Endothelial cell of umbilical vein (primary cell): ENCODE measurements at regions of chr4 and their contacts with region 1.

Region 1: DNA sequence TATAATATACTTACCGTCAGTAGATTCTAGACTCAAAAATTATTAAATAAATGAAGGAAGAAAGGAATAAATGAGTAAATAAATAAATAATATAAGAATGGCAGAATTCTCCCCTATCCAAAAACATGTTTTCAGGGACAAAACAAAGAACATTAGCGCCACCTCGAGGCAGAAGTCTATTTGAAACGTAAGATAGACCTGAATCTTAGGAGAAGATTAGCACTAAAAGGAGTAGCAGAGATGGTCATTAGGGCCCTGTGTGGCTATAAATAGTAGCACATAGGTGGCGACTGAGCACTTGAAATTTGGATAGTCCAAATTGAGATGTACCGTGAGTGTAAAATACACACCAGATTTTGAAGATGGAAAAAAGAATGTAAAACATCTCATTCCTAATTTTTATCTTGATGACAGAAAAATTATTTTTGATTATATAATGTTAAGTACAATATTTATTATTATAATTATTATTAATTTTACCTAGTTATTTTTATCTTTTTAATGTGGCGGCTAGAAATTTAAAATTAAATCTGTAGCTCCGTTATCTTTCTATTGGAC is 24.3 kb upstream of the SRD5A3 start:
- DNase-seq: peak; percentile 82
- H3K4me3 ChIP-seq: no peak overlapping the region
- H3K27ac ChIP-seq: no peak overlapping the region
- H3K4me1 ChIP-seq: peaks cover 41% of the 10 kb centered on the region
- H3K27me3 ChIP-seq: no peaks in the 10 kb centered on the region
- CTCF ChIP-seq: peak; percentile 45 to 49
- POLR2A ChIP-seq: no peak

Region 2: DNA sequence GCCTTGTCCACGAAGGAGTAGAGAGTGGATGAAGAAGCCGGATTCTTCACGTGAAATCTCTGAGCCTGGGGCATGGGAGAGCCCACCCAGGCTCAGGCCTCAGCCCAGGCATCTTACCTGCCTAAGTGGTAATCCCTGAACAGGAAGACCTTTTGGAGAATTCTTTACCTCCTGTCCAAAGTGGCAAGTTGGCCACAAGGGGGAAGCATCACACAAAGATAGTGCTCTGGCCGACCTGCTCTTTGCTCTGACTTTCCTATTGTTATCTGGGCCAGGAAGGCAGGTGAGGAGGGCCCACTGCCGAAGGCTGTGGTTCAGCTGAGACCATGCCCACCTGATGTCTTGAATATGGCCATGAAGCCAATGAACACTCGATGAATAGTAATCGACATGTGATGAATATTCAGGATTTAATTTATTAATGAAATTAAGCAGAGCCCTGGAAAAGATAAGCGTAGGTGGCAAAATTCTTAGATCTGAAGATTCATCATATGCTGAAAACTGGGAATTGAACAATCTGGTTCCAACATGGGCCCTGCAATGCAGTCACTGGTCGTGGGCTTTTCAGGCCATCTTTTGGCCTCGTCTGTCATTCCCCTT is 998.9 kb before region 1 on chr4:
- CTCF ChIA-PET with region 1: no interaction called
- POLR2A ChIA-PET with region 1: no interaction called
- dilution Hi-C with region 1: no loop called
- intact Hi-C with region 1: loop called (anchors 5 kb)
- DNase-seq: peak; percentile 60
- H3K4me3 ChIP-seq: no peak overlapping the region
- H3K27ac ChIP-seq: no peak overlapping the region
- H3K4me1 ChIP-seq: no peaks in the 10 kb centered on the region
- H3K27me3 ChIP-seq: peaks cover 0 to 2% of the 10 kb centered on the region in 2 experiments
- CTCF ChIP-seq: peak; percentile 58 to 73
- POLR2A ChIP-seq: no peak

Region 3: GRCh38 chr4:55069248-55069647 is 252.5 kb before region 1 on chr4:
- CTCF ChIA-PET with region 1: interaction called, 4 read pairs
- POLR2A ChIA-PET with region 1: no interaction called
- dilution Hi-C with region 1: no loop called
- intact Hi-C with region 1: loop called (anchors 5 kb)
- DNase-seq: peak; percentile 95
- H3K4me3 ChIP-seq: peak overlapping the region in 1 of 3 experiments; percentile 2
- H3K27ac ChIP-seq: peak overlapping the region; percentile 98
- H3K4me1 ChIP-seq: peaks cover 26% of the 10 kb centered on the region
- H3K27me3 ChIP-seq: no peaks in the 10 kb centered on the region
- CTCF ChIP-seq: no peak
- POLR2A ChIP-seq: peak; percentile 60

Region 4: DNA sequence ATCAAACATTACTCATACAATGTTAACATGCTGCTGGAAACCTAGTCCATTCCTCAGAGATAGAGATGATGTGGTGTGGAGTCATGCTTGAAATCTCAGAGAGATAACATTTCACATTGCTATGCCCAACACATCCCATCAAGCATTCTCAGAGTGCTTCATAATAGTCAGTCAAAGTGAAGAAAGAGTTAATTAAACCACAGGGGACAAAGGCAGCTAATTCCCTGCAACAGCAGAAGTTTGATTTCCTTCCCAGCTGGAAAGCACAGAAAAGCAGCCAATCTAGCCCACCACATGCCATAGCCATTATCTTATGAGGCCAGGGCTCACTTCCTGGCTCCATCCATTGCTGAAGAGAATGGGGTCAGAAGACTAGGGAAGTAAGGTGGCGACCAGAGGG is 205.3 kb before region 1 on chr4:
- CTCF ChIA-PET with region 1: interaction called, 12 read pairs
- POLR2A ChIA-PET with region 1: no interaction called
- dilution Hi-C with region 1: no loop called
- intact Hi-C with region 1: loop called (anchors 1 kb)
- DNase-seq: peak; percentile 66
- H3K4me3 ChIP-seq: no peak overlapping the region
- H3K27ac ChIP-seq: no peak overlapping the region
- H3K4me1 ChIP-seq: peaks cover 60% of the 10 kb centered on the region
- H3K27me3 ChIP-seq: no peaks in the 10 kb centered on the region
- CTCF ChIP-seq: no peak
- POLR2A ChIP-seq: no peak

Region 5: GRCh38 chr4:55184600-55185523 is 136.9 kb before region 1 on chr4:
- CTCF ChIA-PET with region 1: interaction called, 51 read pairs
- POLR2A ChIA-PET with region 1: no interaction called
- dilution Hi-C with region 1: no loop called
- intact Hi-C with region 1: no loop called
- DNase-seq: no peak
- H3K4me3 ChIP-seq: no peak overlapping the region
- H3K27ac ChIP-seq: peak overlapping the region; percentile 63
- H3K4me1 ChIP-seq: peaks cover 64% of the 10 kb centered on the region
- H3K27me3 ChIP-seq: no peaks in the 10 kb centered on the region
- CTCF ChIP-seq: peak in 1 of 2 donors; percentile 30
- POLR2A ChIP-seq: no peak

Region 6: DNA sequence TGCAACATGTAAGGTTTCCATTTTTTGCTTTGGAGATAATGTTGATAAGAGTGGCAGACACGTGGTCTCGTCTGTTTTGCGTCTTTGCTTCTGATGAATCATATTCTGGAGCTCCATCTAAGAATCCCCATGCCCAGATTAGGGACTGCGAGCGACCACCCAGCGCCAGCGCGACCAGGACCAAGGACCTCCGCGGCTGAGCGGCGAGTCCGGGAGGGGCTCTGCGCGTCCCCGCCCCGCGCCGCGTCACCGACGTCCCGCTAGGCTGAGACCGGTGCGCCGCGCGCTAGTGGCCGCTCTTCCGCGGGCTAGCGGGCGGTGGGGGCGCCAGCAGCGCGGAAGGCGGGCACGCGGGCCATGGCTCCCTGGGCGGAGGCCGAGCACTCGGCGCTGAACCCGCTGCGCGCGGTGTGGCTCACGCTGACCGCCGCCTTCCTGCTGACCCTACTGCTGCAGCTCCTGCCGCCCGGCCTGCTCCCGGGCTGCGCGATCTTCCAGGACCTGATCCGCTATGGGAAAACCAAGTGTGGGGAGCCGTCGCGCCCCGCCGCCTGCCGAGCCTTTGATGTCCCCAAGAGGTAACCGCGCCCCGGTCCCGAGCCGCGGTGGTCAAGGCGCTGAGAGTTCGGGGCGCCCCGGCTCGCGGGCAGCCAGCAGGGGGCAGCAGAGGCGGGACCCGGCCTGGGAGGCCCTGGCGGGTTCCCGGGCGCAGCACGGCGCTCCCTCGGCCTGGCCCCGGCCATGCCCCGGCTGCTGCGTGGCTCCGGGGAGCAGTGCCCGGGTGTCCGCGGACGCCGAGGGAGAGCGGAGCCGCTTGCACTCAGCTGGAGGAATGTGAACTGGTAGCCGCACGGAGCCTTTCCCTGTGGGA is 24.4 kb after region 1 on chr4 and contains the start of gene SRD5A3:
- CTCF ChIA-PET with region 1: interaction called, 18 read pairs
- POLR2A ChIA-PET with region 1: no interaction called
- dilution Hi-C with region 1: no loop called
- intact Hi-C with region 1: no loop called
- DNase-seq: peak; percentile 85
- H3K4me3 ChIP-seq: peak within 1 kb of the TSS; percentile 51 to 75 (median 65)
- H3K27ac ChIP-seq: peak within 1 kb of the TSS; percentile 69
- H3K4me1 ChIP-seq: peaks cover 11% of the 10 kb centered on the region
- H3K27me3 ChIP-seq: no peaks in the 10 kb centered on the region
- CTCF ChIP-seq: peak; percentile 84 to 92
- POLR2A ChIP-seq: peak; percentile 69
- total RNA-seq, gene SRD5A3: 24.3 and 30.4 TPM in 2 replicates